GM10248 (cell line): ENCODE measurements at regions of chr11 and their contacts with region 1.

Region 1: GRCh38 chr11:2955906-2956476 is 26.8 kb upstream of the PHLDA2 start:
- DNase-seq: no peak
- CTCF ChIP-seq: no peak

Region 2: DNA sequence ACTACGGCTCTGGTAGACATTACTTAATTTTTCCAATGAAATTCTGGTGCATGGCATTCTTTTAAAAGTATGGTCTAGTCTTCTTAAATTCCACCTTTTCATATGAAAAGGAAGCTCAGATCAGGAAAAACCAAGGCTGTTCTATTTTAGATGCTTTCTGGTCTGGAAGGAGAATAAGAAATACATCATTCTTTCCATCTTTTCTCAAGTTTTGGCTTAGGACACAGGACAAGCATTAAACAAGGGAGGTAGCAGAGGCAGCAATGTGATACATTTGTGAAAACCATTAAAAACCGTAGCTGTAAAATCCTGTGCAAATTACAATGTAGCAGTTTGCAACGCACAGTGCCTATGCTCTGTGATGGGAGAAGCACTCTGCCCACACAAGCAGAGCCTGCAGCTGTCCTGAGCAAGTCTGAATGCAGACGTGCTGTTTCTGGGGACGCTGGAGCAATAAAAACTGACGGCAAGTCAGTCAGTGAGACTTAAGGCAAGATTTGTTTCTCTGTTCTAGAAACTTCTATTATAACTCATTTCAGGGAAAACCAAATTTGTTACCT is 12.4 kb after region 1 on chr11:
- CTCF ChIA-PET with region 1: interaction called, 11 read pairs
- POLR2A ChIA-PET with region 1: no interaction called
- DNase-seq: no peak
- CTCF ChIP-seq: no peak